Psoas muscle (tissue), 8 donors: ENCODE measurements at regions of chr9 and their contacts with region 1.

Region 1: DNA sequence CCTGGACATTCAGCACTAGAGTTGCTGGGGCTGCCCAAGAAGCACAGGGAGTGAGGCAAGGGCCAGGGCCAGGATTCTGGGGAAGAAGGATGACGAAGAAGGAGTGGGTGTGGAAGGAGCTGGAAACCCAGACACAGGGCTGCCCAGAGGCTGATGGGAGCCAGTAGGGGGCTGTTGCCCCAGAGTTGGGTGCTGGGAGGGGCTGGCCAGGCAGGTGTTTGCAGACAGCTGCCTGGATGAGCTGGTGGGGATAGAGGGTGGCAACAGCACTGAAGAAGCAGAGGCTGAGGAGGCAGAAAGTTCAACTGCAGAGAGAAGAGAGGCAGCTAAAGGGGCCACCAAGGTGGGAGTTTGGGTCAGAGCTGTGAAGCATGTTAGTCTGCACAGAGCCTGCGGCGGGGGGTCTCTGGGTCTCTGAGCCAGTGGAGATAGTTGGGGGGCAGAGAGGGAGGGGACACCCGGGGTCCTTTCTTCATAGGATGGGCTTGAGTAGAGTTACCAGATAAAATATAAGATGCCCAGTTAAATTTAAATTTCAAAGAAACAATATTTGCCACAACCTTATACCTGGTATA is 2.5 kb upstream of the AQP7 start:
- DNase-seq: no peak
- ATAC-seq: no peak
- H3K4me3 ChIP-seq: no peak overlapping the region
- H3K27ac ChIP-seq: no peak overlapping the region
- H3K4me1 ChIP-seq: peaks cover 13% of the 10 kb centered on the region
- H3K27me3 ChIP-seq: no peaks in the 10 kb centered on the region
- CTCF ChIP-seq: no peak

Region 2: GRCh38 chr9:33442999-33443435 is 38.1 kb after region 1 on chr9:
- intact Hi-C with region 1: no loop called
- DNase-seq: peak in 1 of 2 donors; percentile 26
- ATAC-seq: no peak
- H3K4me3 ChIP-seq: no peak overlapping the region
- H3K27ac ChIP-seq: no peak overlapping the region
- H3K4me1 ChIP-seq: peaks cover 14% of the 10 kb centered on the region
- H3K27me3 ChIP-seq: no peaks in the 10 kb centered on the region
- CTCF ChIP-seq: no peak

Region 3: GRCh38 chr9:33466565-33467495 is 62.0 kb after region 1 on chr9:
- intact Hi-C with region 1: loop called in 1 of 2 experiments (anchors 5 kb)
- DNase-seq: peak; percentile 60 to 77
- ATAC-seq: peak; percentile 68 to 83 (median 79)
- H3K4me3 ChIP-seq: no peak overlapping the region
- H3K27ac ChIP-seq: no peak overlapping the region
- H3K4me1 ChIP-seq: peaks cover 2% of the 10 kb centered on the region
- H3K27me3 ChIP-seq: no peaks in the 10 kb centered on the region
- CTCF ChIP-seq: peak; percentile 94

Region 4: GRCh38 chr9:33517373-33517772 is 112.5 kb after region 1 on chr9:
- intact Hi-C with region 1: loop called in 1 of 2 experiments (anchors 5 kb)
- DNase-seq: no peak
- ATAC-seq: peak in 1 of 4 donors; percentile 64
- H3K4me3 ChIP-seq: no peak overlapping the region
- H3K27ac ChIP-seq: no peak overlapping the region
- H3K4me1 ChIP-seq: no peaks in the 10 kb centered on the region
- H3K27me3 ChIP-seq: peaks cover 0 to 3% (median 2%) of the 10 kb centered on the region in 3 donors
- CTCF ChIP-seq: peak; percentile 50

Region 5: DNA sequence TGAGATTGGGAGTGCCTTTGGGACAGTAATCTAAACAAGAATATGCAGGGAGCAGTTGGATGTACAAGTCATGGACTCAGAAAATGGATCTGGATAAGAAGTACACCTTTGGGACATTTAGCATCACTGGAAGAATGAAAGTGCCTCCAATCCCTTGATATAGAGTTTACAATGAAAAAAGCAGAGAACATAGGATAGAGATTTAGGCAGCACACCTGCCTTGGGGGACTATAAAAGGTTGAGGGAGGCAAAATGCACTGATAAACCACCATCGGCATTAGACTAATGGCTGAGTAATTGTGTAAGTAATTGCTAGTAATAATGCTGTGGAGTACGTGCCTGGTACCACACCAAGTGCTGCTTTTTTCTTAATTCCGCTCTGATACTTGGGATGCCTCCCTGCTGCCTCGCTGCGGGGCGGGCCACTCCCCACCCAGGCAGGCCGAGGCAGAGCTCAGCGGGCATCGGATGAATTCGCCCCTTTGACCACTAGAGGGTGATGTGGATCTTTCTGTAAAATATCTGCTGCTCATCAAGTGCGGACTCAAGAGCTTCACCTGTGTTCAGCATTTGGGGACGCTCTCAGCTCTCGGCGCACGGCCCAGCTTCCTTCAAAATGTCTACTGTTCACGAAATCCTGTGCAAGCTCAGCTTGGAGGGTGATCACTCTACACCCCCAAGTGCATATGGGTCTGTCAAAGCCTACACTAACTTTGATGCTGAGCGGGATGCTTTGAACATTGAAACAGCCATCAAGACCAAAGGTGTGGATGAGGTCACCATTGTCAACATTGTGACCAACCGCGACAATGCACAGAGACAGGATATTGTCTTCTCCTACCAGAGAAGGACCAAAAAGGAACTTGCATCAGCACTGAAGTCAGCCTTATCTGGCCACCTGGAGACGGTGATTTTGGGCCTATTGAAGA is 219.0 kb after region 1 on chr9:
- intact Hi-C with region 1: loop called in 1 of 2 experiments (anchors 10 kb)
- DNase-seq: peak; percentile 43 to 64
- ATAC-seq: peak; percentile 82 to 94 (median 89)
- H3K4me3 ChIP-seq: no peak overlapping the region
- H3K27ac ChIP-seq: no peak overlapping the region
- H3K4me1 ChIP-seq: peaks cover 16% of the 10 kb centered on the region
- H3K27me3 ChIP-seq: peaks cover 0 to 2% (median 0%) of the 10 kb centered on the region in 3 donors
- CTCF ChIP-seq: peak; percentile 91